ENCODE measurements at regions of chr20 and their contacts with region 1.

Region 1: DNA sequence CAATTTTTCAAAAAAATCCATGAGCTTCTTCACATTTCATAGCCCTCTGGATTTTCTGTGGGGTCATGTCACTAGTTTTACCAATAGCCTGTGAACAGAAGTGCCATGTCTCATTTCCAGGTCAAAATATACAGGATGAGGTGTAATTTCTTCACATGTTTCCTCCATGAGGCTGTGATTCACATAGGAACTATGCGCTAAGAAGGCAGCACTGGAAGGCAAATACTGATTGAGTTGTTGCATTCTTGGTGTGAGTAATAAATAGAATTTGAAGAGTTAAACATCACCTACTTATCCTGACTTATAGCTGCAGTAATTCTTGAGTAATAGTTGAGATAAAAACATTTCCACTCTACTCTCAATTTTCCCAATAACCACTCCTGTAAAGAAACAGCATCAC is 442.3 kb downstream of the HAO1 start:
- DNase-seq: no peak
- H3K4me3 ChIP-seq: no peak overlapping the region
- H3K27ac ChIP-seq: no peak overlapping the region
- H3K4me1 ChIP-seq: no peaks in the 10 kb centered on the region
- H3K27me3 ChIP-seq: no peaks in the 10 kb centered on the region
- CTCF ChIP-seq: no peak
- POLR2A ChIP-seq: no peak

Region 2: GRCh38 chr20:7449269-7449668 is 48.7 kb before region 1 on chr20:
- intact Hi-C with region 1: no loop called
- DNase-seq: no peak
- H3K4me3 ChIP-seq: no peak overlapping the region
- H3K27ac ChIP-seq: no peak overlapping the region
- H3K4me1 ChIP-seq: no peaks in the 10 kb centered on the region
- H3K27me3 ChIP-seq: no peaks in the 10 kb centered on the region
- CTCF ChIP-seq: no peak
- POLR2A ChIP-seq: no peak

Region 3: DNA sequence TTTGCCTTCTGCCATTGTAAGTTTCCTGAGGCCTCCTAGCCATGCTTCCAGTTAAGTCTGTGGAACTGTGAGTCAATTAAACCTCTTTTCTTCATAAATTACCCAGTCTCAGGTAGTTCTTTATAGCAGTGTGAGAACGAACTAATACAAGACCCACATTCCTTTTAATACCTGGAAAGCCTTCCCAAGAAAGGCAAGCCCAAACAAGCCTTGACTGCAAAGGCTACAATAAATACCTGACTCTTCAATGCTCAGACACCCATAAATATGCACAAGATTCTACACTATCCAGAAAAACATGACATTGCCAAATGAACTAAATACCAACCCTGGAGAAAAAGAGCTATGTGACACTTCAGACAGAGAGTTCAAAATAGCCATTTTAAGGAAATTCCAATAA is 103.4 kb after region 1 on chr20:
- intact Hi-C with region 1: loop called (anchors 5 kb)
- DNase-seq: no peak
- H3K4me3 ChIP-seq: no peak overlapping the region
- H3K27ac ChIP-seq: no peak overlapping the region
- H3K4me1 ChIP-seq: no peaks in the 10 kb centered on the region
- H3K27me3 ChIP-seq: no peaks in the 10 kb centered on the region
- CTCF ChIP-seq: no peak
- POLR2A ChIP-seq: no peak

Measured in vagina (tissue), 2 donors.